GM10248 (cell line): ENCODE measurements at regions of chr4 and their contacts with region 1.

Region 1: DNA sequence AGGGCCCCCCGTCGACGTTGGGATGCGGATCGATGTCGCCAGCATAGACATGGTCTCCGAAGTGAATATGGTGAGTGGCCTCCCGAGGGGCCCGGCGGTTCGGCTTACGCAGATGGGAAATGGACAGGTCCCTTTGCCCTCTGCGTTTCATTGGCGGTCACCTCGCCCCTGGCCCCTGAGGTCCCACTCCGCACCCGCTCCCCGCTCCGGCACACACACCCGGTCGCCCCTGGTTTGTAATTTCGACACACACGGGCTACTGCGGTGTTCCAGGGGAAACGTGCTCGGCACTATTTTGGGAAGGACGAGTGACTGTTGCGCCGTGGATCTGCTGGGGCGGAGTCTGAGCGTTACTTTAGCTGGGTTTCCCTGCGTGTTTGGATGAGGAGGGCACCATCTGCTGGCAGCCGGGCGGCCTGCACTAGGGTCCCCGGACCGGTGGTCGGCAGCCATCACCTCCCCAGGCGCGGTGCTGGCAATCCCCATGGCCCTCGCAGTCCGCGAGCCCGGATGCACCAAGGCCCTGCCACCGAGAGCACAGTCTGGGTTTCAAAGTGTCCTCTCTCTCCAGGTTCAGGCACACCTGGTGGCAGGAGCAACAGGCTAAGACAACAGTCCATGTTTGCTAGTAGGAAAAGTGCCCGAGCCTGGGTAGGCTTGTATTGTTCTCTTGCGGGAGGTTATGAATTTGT is 1.2 kb downstream of the GABRB1 start:
- DNase-seq: peak; percentile 76
- CTCF ChIP-seq: peak; percentile 86

Region 2: DNA sequence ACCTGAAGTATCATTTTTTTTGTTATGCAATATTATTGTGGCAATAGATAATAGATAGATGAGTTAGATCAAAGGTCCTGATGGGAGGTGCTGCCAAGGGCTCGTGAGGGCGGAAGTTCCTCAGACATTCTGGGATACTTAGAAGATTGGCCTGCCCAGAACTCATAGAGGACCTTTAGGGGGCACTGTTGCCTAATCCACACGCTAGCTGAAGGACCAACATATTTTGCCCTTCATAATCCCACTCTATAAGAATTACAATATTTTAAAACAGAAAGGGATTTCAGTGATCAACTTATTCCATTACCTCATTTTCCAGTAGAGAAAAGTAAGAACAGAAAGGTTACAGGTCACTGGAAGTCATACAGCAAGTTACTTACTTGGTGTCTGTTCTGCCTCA is 100.6 kb before region 1 on chr4:
- CTCF ChIA-PET with region 1: interaction called, 14 read pairs
- POLR2A ChIA-PET with region 1: no interaction called
- DNase-seq: peak; percentile 15
- CTCF ChIP-seq: peak; percentile 64